Activated CD8-positive, alpha-beta T cell treated with anti-CD3 and anti-CD28 coated beads for 36 hours (primary cell): ENCODE measurements at regions of chr9 and their contacts with region 1.

Region 1: DNA sequence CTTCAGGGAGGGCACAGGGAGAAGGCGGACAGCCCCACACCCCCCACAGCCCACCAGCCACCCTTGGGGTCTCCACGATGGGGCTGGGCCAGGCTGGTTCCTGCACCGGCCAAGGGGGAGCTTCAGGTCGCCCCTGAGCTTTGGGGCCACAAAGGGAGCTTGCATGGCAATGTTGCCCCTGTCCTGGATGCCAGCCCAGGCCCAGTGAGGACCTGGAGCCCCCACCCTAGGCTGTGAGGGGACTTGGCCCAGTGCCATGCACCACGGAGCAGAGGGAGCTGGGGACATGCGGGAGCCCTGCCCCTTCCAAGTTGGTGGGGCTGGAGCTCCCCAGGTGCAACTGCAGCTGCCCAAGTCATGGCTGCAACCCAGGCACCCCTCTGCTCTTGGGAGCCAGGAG is 18.4 kb downstream of the TMEM38B start:
- DNase-seq: no peak
- ATAC-seq: no peak
- H3K4me3 Mint-ChIP-seq: no peak overlapping the region
- H3K27ac Mint-ChIP-seq: no peak overlapping the region
- H3K4me1 Mint-ChIP-seq: peaks cover 7% of the 10 kb centered on the region
- H3K27me3 Mint-ChIP-seq: no peaks in the 10 kb centered on the region
- CTCF ChIP-seq: no peak

Region 2: DNA sequence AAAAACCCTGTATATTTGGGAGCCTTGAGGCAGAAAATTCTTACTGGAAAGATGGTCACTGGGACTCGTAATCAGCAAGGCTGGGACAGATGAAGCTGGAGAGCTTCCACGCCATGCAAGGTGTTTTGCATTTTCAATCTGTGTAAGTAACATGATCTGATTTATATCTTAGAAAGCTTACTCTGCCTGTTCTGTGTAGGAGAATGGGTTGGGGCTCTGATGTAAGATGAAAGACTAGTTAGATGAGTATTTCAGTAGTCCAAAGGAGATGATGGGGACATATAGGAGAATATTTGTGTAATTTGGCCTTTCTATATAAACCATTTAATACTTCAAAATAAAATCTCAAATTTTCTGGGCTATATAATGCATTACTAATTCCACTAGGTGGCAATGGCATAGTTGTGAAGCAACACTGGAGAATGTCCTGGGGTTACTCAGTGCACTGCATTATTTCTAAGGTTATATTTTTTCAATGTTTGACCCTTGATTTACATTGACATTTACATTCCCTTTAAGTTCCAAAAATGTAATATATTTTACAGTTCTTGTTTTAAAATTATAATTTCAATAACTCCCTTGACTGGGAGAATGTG is 286.8 kb before region 1 on chr9:
- CTCF ChIA-PET with region 1: no interaction called
- POLR2A ChIA-PET with region 1: no interaction called
- intact Hi-C with region 1: loop called (anchors 10 kb)
- DNase-seq: no peak
- ATAC-seq: no peak
- H3K4me3 Mint-ChIP-seq: no peak overlapping the region
- H3K27ac Mint-ChIP-seq: no peak overlapping the region
- H3K4me1 Mint-ChIP-seq: no peaks in the 10 kb centered on the region
- H3K27me3 Mint-ChIP-seq: no peaks in the 10 kb centered on the region
- CTCF ChIP-seq: peak; percentile 37

Region 3: GRCh38 chr9:105608721-105609598 is 103.8 kb before region 1 on chr9:
- CTCF ChIA-PET with region 1: interaction called, 7 read pairs
- POLR2A ChIA-PET with region 1: no interaction called
- intact Hi-C with region 1: loop called (anchors 10 kb)
- DNase-seq: no peak
- ATAC-seq: peak; percentile 58
- H3K4me3 Mint-ChIP-seq: no peak overlapping the region
- H3K27ac Mint-ChIP-seq: no peak overlapping the region
- H3K4me1 Mint-ChIP-seq: no peaks in the 10 kb centered on the region
- H3K27me3 Mint-ChIP-seq: no peaks in the 10 kb centered on the region
- CTCF ChIP-seq: peak; percentile 69

Region 4: DNA sequence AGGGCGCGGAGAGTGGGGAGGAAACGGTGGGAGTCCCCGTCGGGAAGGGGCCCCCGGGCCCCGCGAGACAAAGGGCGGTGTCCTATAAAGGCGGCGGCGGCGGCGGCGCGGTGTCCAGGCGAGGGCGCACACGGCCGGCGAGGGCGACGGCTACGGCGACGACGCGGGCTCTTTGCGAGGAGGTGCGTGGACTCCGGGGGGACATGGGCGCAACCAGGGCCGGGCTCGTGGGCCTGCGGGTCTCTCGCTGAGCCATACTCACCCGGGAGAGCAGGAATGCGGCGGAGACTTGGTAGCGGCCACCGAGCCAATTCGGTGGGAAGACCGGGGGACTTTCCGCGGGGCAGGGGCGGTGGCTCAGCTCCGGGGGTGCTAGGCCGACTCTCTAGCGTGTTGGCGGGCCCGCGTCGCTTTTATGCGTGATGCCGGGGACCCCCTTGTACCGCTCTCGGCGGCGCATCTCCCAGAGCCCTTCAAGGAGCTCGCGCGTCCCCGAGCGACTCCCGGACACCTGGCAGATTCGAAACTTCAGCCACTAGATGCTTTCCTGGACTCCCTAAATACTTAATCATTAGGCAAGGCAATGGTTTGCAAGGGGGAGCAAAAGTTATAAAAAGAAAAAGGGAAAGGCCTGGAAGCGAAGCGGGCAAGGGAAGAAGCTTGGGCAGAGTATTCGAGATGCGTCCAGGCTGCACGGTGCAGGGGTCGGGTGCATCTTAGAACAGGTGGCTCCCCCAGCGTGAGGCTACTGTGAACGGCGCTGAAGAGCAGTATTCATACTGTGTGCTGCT is 56.4 kb before region 1 on chr9:
- CTCF ChIA-PET with region 1: no interaction called
- POLR2A ChIA-PET with region 1: no interaction called
- intact Hi-C with region 1: loop called (anchors 2 kb)
- DNase-seq: peak; percentile 8
- ATAC-seq: peak; percentile 65
- H3K4me3 Mint-ChIP-seq: peak overlapping the region; percentile 60
- H3K27ac Mint-ChIP-seq: no peak overlapping the region
- H3K4me1 Mint-ChIP-seq: peaks cover 11% of the 10 kb centered on the region
- H3K27me3 Mint-ChIP-seq: peaks cover 30% of the 10 kb centered on the region
- CTCF ChIP-seq: no peak

Region 5: DNA sequence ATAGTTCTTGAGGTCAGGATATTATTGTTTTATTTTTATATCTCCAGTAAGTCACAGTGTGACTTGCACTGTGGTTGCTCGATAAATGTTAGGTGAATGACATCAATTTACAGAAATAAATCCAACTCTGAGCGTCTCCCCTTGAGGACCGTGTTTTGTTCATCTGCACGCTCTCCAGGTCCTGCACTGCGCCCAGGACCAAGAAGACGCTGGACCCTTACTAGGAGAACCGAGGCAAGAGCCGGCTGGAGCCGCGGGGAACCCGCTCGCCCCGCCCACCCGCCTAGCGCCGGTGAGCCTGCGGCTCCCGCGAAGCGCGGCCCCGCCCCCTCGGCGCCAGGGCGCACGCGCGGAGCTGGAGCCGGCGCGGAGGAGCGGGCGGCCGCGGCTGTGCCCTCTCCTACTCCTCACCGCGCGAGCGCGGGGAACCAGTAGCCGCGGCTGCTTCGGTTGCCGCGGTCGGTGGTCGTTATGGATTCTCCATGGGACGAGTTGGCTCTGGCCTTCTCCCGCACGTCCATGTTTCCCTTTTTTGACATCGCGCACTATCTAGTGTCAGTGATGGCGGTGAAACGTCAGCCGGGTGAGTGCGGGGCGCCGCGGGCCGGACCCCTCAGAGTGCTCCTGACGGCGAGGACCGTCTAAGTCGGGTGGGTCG is 18.5 kb before region 1 on chr9 and contains the start of gene TMEM38B:
- CTCF ChIA-PET with region 1: interaction called, 14 read pairs
- POLR2A ChIA-PET with region 1: interaction called, 3 read pairs
- intact Hi-C with region 1: no loop called
- DNase-seq: peak; percentile 74
- ATAC-seq: peak; percentile 86
- H3K4me3 Mint-ChIP-seq: peak within 1 kb of the TSS; percentile 82
- H3K27ac Mint-ChIP-seq: peak within 1 kb of the TSS; percentile 65
- H3K4me1 Mint-ChIP-seq: peaks cover 26% of the 10 kb centered on the region
- H3K27me3 Mint-ChIP-seq: peaks cover 14% of the 10 kb centered on the region
- CTCF ChIP-seq: no peak
- total RNA-seq, gene TMEM38B: 8.2 to 11.3 TPM